T-cell (primary cell): ENCODE measurements at regions of chr4 and their contacts with region 1.

Region 1: DNA sequence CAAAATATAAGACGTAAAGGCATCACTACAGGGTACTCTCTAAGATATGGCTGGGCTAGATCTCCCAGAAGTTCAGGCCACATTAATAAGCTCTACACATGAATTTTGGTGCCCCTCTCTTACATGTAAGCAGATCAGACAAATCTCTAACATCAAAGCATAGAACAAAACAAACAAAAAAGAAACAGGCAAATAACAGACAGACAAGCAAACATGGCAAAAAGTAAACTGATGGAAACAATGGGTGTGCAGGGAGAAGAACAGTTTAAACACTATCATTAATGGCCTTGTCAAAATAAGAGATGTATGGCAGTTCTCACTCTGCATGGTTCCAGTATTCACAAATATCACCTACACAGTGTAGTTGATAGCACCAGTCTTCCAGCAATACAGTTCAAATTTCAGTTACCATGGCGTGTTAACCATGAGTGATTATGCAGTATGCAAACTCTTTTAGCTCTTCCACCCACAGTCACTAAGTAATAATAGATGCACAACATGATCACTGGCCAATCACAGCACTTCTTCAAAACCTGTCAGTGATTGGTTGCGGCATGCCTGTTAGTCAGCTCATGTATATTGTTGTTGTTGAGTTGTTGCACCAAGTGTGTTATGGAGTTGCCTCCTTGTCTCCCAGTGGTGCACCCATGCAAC is 110.7 kb upstream of the TLR3 start:
- DNase-seq: no peak
- ATAC-seq: no peak
- H3K4me3 ChIP-seq: no peak overlapping the region
- H3K4me3 Mint-ChIP-seq: no peak overlapping the region
- H3K27ac ChIP-seq: no peak overlapping the region
- H3K27ac Mint-ChIP-seq: no peak overlapping the region
- H3K4me1 ChIP-seq: no peaks in the 10 kb centered on the region
- H3K4me1 Mint-ChIP-seq: no peaks in the 10 kb centered on the region
- H3K27me3 ChIP-seq: peaks cover 0 to 3% of the 10 kb centered on the region in 2 experiments
- H3K27me3 Mint-ChIP-seq: peaks cover 13 to 20% of the 10 kb centered on the region in 2 donors

Region 2: DNA sequence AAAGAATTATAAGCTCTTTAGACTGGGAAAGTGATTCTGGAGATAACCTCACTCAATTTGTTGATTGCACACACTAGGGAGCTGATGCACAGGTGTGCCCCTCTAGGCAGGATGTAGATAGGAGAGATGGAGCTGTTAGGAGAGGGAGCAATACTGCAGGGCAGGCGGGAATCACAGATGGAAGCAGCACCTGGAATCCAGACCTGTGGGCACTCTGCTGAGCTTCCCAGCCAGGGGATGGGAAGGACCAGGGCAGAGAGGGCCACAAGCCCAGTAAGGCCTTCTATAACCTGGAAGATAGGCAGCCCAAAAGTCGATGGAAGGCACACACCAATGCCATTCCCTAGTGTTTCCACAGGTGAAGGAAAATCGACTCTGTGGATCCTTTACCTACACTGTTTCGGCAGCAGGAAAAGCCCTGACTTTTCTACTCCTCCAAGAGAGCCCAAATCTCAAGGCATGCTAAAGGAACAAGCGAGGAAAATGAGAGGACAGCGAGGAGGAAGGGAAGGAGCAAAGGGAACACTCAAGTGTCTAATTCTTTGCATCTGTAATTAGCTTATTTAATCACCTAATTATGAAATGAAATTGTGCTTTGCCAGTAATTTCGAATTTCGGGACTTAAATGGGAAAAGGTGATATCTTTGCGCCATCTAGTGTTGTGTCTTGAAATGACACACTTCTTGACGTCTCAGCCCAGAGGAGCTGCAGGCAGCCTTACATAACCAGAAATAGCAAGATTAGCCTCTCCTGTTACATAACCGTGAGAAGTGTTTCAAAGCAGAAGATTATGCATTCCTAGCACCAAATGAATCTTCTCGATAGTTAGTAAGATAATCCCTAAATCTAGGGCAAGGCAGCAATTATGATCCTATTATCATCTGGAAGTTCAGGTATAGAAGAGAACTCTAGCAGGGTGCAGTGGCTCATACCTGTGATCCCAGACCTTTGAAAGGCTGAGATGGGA is 79.8 kb after region 1 on chr4:
- CTCF ChIA-PET with region 1: no interaction called
- POLR2A ChIA-PET with region 1: interaction called in 1 of 2 experiments, 12 read pairs
- DNase-seq: peak in 5 of 35 experiments; percentile 7 to 61 (median 8)
- ATAC-seq: peak in 1 of 4 experiments; percentile 45
- H3K4me3 ChIP-seq: no peak overlapping the region
- H3K4me3 Mint-ChIP-seq: no peak overlapping the region
- H3K27ac ChIP-seq: no peak overlapping the region
- H3K27ac Mint-ChIP-seq: no peak overlapping the region
- H3K4me1 ChIP-seq: no peaks in the 10 kb centered on the region
- H3K4me1 Mint-ChIP-seq: no peaks in the 10 kb centered on the region
- H3K27me3 ChIP-seq: peaks cover 0 to 16% of the 10 kb centered on the region in 2 experiments
- H3K27me3 Mint-ChIP-seq: peaks cover 33 to 34% of the 10 kb centered on the region in 2 donors